ENCODE measurements at regions of chr9 and their contacts with region 1.

Region 1: GRCh38 chr9:136949817-136950655 is 2.0 kb upstream of the LCN12 start:
- DNase-seq: peak; percentile 89 to 97
- H3K4me3 ChIP-seq: peak overlapping the region; percentile 61 to 93
- H3K27ac ChIP-seq: peak overlapping the region; percentile 86 to 89
- H3K4me1 ChIP-seq: peaks cover 0 to 35% (median 26%) of the 10 kb centered on the region in 4 donors
- H3K27me3 ChIP-seq: no peaks in the 10 kb centered on the region
- CTCF ChIP-seq: peak; percentile 11 to 30

Region 2: DNA sequence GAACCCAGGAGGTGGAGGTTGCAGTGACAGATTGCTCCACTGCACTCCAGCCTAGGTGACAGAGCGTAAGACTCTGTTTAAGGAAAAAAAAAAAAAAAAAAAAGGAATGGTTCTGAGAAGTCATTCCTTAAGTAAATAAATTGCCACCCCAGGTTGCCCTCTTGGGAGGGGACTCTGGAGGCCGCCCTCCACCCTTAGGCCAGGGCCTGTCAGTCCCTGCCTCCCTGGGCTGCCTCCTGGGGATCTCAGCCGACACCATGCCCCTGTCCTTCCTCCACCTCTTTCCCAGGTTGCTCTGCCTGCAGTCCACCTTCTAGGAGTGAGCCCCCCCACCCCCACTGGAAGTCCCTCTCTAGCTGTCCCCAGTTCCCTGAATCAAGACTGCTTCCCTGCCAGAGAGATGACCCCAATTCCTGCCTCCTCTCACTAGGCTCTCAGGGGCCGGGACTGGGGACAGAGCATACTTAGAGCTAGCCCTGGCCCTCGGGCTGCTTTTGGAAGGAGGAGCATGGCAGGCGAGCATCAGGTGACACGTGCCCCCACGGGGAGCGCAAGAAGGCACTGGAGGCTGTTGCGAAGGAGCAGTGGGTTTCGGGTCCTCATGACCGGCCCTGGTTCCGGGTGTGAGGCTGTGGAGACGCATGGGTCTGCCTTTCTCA is 54.1 kb before region 1 on chr9:
- intact Hi-C with region 1: no loop called
- DNase-seq: no peak
- H3K4me3 ChIP-seq: no peak overlapping the region
- H3K27ac ChIP-seq: no peak overlapping the region
- H3K4me1 ChIP-seq: peaks cover 0 to 5% (median 2%) of the 10 kb centered on the region in 4 donors
- H3K27me3 ChIP-seq: no peaks in the 10 kb centered on the region
- CTCF ChIP-seq: no peak

Region 3: DNA sequence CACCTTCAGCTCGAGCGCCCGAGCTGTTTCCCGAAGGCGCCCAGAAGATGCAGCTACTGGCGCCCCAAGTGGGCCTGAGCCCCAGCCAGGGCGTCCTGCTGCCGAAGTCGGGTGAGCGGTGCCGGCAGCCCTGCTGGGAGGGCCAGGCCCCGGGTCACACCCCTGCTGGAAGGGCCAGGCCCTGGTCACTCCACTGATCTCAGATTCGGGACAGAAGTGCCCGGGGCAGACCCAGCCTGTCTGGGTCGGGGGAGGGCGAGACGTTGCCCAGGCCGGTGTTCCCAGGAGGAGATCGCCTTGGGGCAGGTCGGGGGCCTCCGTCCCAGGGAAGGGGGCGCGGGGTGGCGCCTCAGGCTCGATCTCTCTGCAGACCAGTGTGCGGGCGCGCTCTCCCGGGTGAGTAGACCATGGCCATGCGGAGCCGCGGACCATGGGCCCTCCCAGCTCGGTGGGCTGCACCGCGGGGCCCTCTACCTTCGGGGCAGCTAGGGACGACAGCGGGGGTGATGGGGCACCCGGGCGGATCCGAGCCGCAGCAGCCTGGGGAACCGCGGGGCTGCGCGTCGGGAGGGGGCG is 35.1 kb after region 1 on chr9:
- intact Hi-C with region 1: loop called (anchors 5 kb)
- DNase-seq: no peak
- H3K4me3 ChIP-seq: no peak overlapping the region
- H3K27ac ChIP-seq: no peak overlapping the region
- H3K4me1 ChIP-seq: peaks cover 0 to 8% (median 2%) of the 10 kb centered on the region in 4 donors
- H3K27me3 ChIP-seq: peaks cover 0 to 63% of the 10 kb centered on the region in 2 donors
- CTCF ChIP-seq: no peak

Region 4: GRCh38 chr9:137029058-137029936 is 79.3 kb after region 1 on chr9:
- intact Hi-C with region 1: loop called (anchors 5 kb)
- DNase-seq: peak; percentile 68 to 82
- H3K4me3 ChIP-seq: peak overlapping the region; percentile 57 to 60
- H3K27ac ChIP-seq: no peak overlapping the region
- H3K4me1 ChIP-seq: peaks cover 0 to 38% (median 28%) of the 10 kb centered on the region in 4 donors
- H3K27me3 ChIP-seq: peaks cover 0 to under 1% of the 10 kb centered on the region in 2 donors
- CTCF ChIP-seq: peak; percentile 75 to 85

Measured in tibial artery (tissue), 4 donors.